Aorta (tissue), 5 donors: ENCODE measurements at regions of chr6 and their contacts with region 1.

Region 1: DNA sequence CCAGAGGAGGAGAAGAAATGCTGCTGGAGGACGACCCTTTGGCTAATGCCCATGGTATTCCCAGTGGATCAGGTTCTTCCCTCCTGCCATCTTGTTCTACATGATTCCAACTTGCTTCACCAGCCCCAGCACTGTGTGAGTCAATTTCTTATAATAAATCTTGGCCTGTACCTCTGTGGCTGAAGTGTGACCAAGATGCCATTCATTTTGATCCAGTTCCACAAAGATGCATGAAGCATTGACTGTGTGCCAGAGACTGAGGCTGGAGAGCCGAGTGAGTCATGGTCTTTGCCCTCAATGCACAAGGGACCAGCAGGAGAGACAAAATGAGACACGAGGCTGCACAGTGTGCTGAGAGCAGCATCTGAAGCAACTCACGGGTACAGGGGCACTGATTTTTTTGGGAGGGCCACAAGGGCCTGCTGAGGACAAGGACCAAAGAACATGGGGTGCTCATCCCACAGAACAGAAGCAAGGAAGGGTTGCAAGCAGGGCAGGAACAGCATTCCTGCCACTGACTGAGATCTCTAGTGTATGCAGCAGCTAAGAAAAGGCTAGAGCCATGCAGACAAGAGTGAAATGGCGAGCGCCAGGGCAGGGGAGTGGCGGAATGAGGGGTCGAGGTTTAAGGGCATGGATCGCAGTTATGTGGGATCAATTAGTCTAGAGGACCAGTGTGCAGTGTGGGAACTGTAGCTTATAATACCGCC is 207.0 kb downstream of the THBS2 start:
- DNase-seq: peak in 1 of 2 donors; percentile 59
- ATAC-seq: peak; percentile 73
- H3K4me3 ChIP-seq: no peak overlapping the region
- H3K27ac ChIP-seq: peak overlapping the region in 1 of 2 donors; percentile 96
- H3K4me1 ChIP-seq: peaks cover 0 to 4% of the 10 kb centered on the region in 2 donors
- H3K27me3 ChIP-seq: no peaks in the 10 kb centered on the region

Region 2: GRCh38 chr6:168574699-168575195 is 471.9 kb before region 1 on chr6:
- intact Hi-C with region 1: no loop called
- DNase-seq: peak; percentile 86 to 90
- ATAC-seq: peak; percentile 86
- H3K4me3 ChIP-seq: no peak overlapping the region
- H3K27ac ChIP-seq: peak overlapping the region; percentile 63 to 95
- H3K4me1 ChIP-seq: peaks cover 0 to 13% of the 10 kb centered on the region in 2 donors
- H3K27me3 ChIP-seq: no peaks in the 10 kb centered on the region

Region 3: GRCh38 chr6:168971549-168971948 is 75.1 kb before region 1 on chr6:
- intact Hi-C with region 1: loop called in 1 of 2 experiments (anchors 5 kb)
- DNase-seq: no peak
- ATAC-seq: no peak
- H3K4me3 ChIP-seq: no peak overlapping the region
- H3K27ac ChIP-seq: no peak overlapping the region
- H3K4me1 ChIP-seq: peaks cover 0 to 2% of the 10 kb centered on the region in 2 donors
- H3K27me3 ChIP-seq: no peaks in the 10 kb centered on the region

Region 4: DNA sequence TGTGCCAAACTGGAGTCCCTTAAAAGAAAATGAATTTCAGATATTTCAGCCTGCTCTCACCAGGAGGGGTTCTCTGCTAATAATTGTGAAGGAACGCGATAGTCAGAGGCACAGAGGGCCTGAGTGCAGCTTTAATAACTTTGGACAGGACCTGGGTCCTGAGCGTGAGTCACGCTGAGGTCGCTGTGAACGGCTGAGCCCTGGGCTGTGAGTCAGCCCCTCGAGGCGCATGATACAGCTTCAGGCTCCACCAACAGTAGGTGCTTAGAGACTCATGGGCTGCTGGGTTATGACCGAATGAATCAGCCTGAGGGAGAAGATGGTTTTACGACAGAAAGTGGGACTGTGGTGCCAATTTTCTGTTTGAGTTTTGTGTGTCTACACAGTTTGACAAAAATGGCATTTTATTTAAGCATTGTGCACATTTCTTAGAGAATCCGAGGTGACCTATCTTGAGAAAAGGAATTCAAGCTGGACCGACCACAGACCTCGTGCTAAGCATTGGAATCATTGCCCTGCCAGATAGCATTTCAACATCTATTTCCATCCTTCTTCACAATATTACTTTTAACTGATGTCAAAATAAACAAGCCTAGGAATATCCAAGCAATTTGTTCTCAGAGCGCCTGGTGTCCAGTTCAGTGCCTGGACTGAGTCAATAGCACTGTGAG is 24.0 kb after region 1 on chr6:
- intact Hi-C with region 1: loop called in 1 of 2 experiments (anchors 2 kb)
- DNase-seq: peak; percentile 94 to 95
- ATAC-seq: peak; percentile 96
- H3K4me3 ChIP-seq: no peak overlapping the region
- H3K27ac ChIP-seq: peak overlapping the region; percentile 83 to 89
- H3K4me1 ChIP-seq: no peaks in the 10 kb centered on the region
- H3K27me3 ChIP-seq: no peaks in the 10 kb centered on the region

Region 5: GRCh38 chr6:169162752-169163591 is 116.3 kb after region 1 on chr6:
- intact Hi-C with region 1: loop called in 1 of 2 experiments (anchors 10 kb)
- DNase-seq: peak; percentile 88 to 92
- ATAC-seq: peak; percentile 77
- H3K4me3 ChIP-seq: no peak overlapping the region
- H3K27ac ChIP-seq: peak overlapping the region; percentile 24 to 85
- H3K4me1 ChIP-seq: peaks cover 0 to 3% of the 10 kb centered on the region in 2 donors
- H3K27me3 ChIP-seq: no peaks in the 10 kb centered on the region

Region 6: DNA sequence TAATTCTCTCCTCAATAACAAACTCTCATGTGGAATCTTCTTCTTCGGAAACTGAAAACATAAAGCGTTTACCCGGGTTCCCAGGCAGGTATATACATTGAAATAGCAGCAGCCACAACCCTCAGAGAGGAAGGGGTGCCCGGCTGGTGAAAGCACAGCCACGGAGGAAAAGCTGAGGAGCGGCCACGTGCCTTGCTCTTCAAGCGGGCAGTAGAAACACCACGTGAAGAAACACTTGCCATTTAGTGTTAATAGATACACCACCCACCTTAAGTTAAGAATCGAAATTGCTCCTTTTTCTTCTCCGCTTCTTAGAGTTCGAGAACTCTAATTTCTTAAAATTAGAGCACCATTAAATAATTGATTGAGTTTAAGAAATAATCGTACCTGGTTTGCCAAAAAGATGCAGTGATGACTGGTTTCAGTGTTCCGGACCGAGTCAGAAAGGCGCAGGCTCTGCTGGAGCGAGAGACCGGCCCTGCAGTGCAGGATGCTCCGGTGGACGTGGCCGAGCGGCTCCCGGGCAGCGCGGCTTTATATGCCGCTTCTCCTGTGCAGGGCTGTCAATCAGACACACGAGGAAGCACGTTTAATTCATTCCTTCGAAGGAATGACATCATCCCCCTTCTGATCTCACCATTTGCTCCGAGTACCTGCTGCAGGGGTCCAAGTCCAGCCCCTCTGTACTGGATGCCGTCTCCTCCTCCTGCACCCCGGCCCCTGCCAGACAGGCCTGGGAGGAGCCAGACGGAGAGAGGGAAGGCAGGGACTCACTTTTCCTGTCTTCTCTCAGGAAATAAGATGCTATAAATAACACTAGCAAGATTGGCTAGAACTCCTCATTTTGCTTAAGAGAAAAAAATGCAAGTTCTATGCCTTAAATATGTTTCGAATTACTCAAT is 206.9 kb after region 1 on chr6 and contains the start of gene THBS2:
- intact Hi-C with region 1: no loop called
- DNase-seq: peak; percentile 91 to 94
- ATAC-seq: peak; percentile 86
- H3K4me3 ChIP-seq: peak within 1 kb of the TSS; percentile 60 to 68
- H3K27ac ChIP-seq: peak within 1 kb of the TSS in 1 of 2 donors; percentile 73
- H3K4me1 ChIP-seq: no peaks in the 10 kb centered on the region
- H3K27me3 ChIP-seq: no peaks in the 10 kb centered on the region
- total RNA-seq, gene THBS2: 700 to 1,026 TPM